ENCODE measurements at regions of chr12 and their contacts with region 1.

Region 1: GRCh38 chr12:56029666-56030293 is 8.9 kb downstream of the IKZF4 start:
- DNase-seq: peak; percentile 59
- ATAC-seq: peak; percentile 81
- H3K4me3 ChIP-seq: no peak overlapping the region
- H3K27ac ChIP-seq: peak overlapping the region; percentile 27
- H3K4me1 ChIP-seq: peaks cover 17% of the 10 kb centered on the region
- H3K27me3 ChIP-seq: no peaks in the 10 kb centered on the region
- CTCF ChIP-seq: peak; percentile 85

Region 2: GRCh38 chr12:55966408-55967281 is 63.1 kb before region 1 on chr12 and contains the start of gene CDK2:
- CTCF ChIA-PET with region 1: interaction called, 12 read pairs
- POLR2A ChIA-PET with region 1: no interaction called
- intact Hi-C with region 1: no loop called
- DNase-seq: peak; percentile 86
- ATAC-seq: peak; percentile 96
- H3K4me3 ChIP-seq: peak within 1 kb of the TSS; percentile 80
- H3K27ac ChIP-seq: no peak within 1 kb of the TSS; the same call in 1 of the 2 replicates
- H3K4me1 ChIP-seq: peaks cover 24% of the 10 kb centered on the region
- H3K27me3 ChIP-seq: no peaks in the 10 kb centered on the region
- CTCF ChIP-seq: no peak
- total RNA-seq, gene CDK2: 63.0 and 68.2 TPM in 2 replicates

Region 3: GRCh38 chr12:56172831-56173230 is 143.1 kb after region 1 on chr12:
- CTCF ChIA-PET with region 1: interaction called, 19 read pairs
- POLR2A ChIA-PET with region 1: no interaction called
- intact Hi-C with region 1: no loop called
- DNase-seq: no peak
- ATAC-seq: no peak
- H3K4me3 ChIP-seq: no peak overlapping the region
- H3K27ac ChIP-seq: no peak overlapping the region
- H3K4me1 ChIP-seq: no peaks in the 10 kb centered on the region
- H3K27me3 ChIP-seq: no peaks in the 10 kb centered on the region
- CTCF ChIP-seq: no peak